Heart right ventricle (tissue), 16 donors: ENCODE measurements at regions of chr17 and their contacts with region 1.

Region 1: GRCh38 chr17:35448214-35448898 is at the start of gene SLFN13:
- DNase-seq: peak; percentile 81 to 88
- ATAC-seq: peak; percentile 89 to 95 (median 93)
- H3K4me3 ChIP-seq: peak within 1 kb of the TSS; percentile 38 to 66 (median 61)
- H3K27ac ChIP-seq: peak within 1 kb of the TSS in 9 of 10 donors; percentile 39 to 84 (median 77)
- H3K4me1 ChIP-seq: peaks cover 0 to 24% (median 13%) of the 10 kb centered on the region in 9 donors
- H3K27me3 ChIP-seq: peaks cover 0 to 61% (median 21%) of the 10 kb centered on the region in 7 donors
- CTCF ChIP-seq: no peak
- total RNA-seq, gene SLFN13: 1.8 to 10.7 (median 4.4) TPM

Region 2: GRCh38 chr17:35496470-35497290 is 48.3 kb after region 1 on chr17:
- intact Hi-C with region 1: no loop called
- DNase-seq: no peak
- ATAC-seq: no peak
- H3K4me3 ChIP-seq: peak overlapping the region in 4 of 10 donors; percentile 14 to 25 (median 20)
- H3K27ac ChIP-seq: no peak overlapping the region
- H3K4me1 ChIP-seq: peaks cover 0 to 21% (median 7%) of the 10 kb centered on the region in 9 donors
- H3K27me3 ChIP-seq: peaks cover 11 to 99% (median 94%) of the 10 kb centered on the region in 7 donors
- CTCF ChIP-seq: no peak

Region 3: DNA sequence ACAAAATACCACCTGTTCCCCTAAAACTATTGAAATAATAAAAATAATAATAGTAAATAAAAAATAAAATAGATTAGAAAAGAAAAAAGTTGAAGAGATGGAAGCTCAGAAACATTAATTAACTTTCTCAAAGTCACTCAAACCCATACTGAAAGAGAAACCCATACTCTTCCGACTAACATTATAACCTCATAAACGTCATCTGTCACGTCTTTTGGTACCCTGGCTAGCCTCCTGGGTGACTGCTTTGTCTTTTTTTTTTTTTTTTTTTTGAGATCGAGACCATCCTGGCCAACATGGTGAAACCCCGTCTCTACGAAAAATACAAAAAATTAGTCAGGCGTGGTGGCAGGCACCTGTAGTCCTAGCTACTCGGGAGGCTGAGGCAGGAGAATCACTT is 81.5 kb after region 1 on chr17:
- intact Hi-C with region 1: loop called in 1 of 10 experiments (anchors 5 kb)
- DNase-seq: no peak
- ATAC-seq: no peak
- H3K4me3 ChIP-seq: no peak overlapping the region
- H3K27ac ChIP-seq: no peak overlapping the region
- H3K4me1 ChIP-seq: peaks cover 0 to 6% (median 0%) of the 10 kb centered on the region in 9 donors
- H3K27me3 ChIP-seq: no peaks in the 10 kb centered on the region
- CTCF ChIP-seq: no peak